MCF 10A (cell line): ENCODE measurements at regions of chr1 and their contacts with region 1.

Region 1: DNA sequence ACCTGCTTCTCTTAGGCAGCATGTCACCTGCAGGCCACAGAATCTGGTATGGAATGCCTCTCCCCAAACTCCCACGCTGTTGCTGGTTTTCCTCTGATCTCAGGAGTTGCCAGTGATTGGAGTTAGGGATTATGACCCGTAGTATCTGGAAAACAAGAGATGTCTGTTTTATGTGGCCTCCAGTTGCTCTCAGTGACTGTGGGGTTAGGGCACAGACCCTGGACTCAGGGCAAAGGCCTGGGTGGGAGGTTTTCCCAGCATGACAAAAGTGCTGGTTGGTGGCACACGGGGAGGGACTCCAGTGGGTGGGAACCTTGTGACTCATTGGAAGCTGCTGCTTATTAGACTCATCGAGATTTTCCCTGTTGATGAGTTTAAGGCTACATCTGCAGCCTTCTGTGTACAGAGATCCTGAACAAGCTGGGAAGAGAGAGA is at the start of gene NR1I3:
- DNase-seq: no peak
- H3K4me3 Mint-ChIP-seq: no peak within 1 kb of the TSS
- H3K27ac Mint-ChIP-seq: no peak within 1 kb of the TSS
- H3K4me1 Mint-ChIP-seq: peaks cover 11% of the 10 kb centered on the region
- H3K27me3 Mint-ChIP-seq: no peaks in the 10 kb centered on the region
- CTCF ChIP-seq: no peak
- total RNA-seq, gene NR1I3: not detected in 2 replicates

Region 2: GRCh38 chr1:161145832-161146231 is 92.2 kb before region 1 on chr1:
- CTCF ChIA-PET with region 1: no interaction called
- POLR2A ChIA-PET with region 1: no interaction called
- intact Hi-C with region 1: no loop called
- DNase-seq: no peak
- H3K4me3 Mint-ChIP-seq: no peak overlapping the region
- H3K27ac Mint-ChIP-seq: no peak overlapping the region
- H3K4me1 Mint-ChIP-seq: no peaks in the 10 kb centered on the region
- H3K27me3 Mint-ChIP-seq: no peaks in the 10 kb centered on the region
- CTCF ChIP-seq: no peak

Region 3: DNA sequence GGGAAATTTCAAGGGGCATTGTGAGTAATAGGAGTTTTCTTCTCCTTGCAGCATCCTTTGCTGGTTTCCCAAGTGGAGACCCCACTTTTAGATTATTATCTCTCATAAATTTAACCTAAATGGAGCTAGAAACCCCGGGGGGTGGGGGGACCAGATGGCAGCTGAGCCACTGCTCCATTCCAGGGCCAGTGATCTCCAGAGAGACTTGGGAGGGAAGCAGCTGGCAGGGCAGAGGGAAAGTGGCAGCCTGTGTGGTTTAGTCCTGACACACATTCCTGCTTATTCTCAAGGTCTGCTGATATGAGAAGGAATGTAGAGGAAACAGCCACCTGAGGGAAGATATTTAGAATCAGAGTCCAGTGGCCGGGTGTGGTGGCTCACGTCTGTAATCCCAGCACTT is 36.8 kb after region 1 on chr1:
- CTCF ChIA-PET with region 1: no interaction called
- POLR2A ChIA-PET with region 1: no interaction called
- intact Hi-C with region 1: loop called (anchors 5 kb)
- DNase-seq: no peak
- H3K4me3 Mint-ChIP-seq: no peak overlapping the region
- H3K27ac Mint-ChIP-seq: no peak overlapping the region
- H3K4me1 Mint-ChIP-seq: no peaks in the 10 kb centered on the region
- H3K27me3 Mint-ChIP-seq: peaks cover 58% of the 10 kb centered on the region
- CTCF ChIP-seq: no peak